ENCODE measurements at regions of chr12 and their contacts with region 1.

Region 1: GRCh38 chr12:47397664-47398281 is 308.1 kb downstream of the RPAP3 start:
- DNase-seq: peak in 2 of 4 experiments; percentile 32 to 57
- ATAC-seq: peak; percentile 95
- H3K4me3 ChIP-seq: no peak overlapping the region
- H3K27ac ChIP-seq: no peak overlapping the region
- H3K4me1 ChIP-seq: peaks cover 0 to 8% of the 10 kb centered on the region in 2 experiments; a peak in 1 of 5 replicates
- H3K27me3 ChIP-seq: no peaks in the 10 kb centered on the region
- CTCF ChIP-seq: peak; percentile 46 to 71 (median 56); a peak in 5 of 6 replicates
- EP300 ChIP-seq: no peak
- POLR2A ChIP-seq: no peak
- RAD21 ChIP-seq: peak; percentile 65 to 86

Region 2: DNA sequence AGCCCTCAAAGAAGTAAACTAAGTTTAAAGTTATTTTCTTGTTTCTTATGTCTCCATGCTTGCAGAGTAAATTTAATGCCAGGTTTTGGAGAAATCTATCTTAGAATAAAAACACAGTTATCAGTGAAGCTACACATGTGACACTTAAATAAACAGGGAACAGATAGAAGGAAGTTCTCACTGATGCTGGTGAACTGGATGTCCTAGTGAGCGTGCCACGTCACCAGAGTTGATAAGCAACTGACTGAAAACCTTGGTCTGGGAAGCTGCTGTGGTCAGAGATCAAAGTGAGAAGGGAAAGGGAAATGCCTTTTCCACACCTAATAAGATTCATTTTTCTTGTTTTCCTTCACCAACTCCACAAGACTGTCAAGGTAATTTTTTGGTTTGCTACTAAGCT is 393.1 kb before region 1 on chr12:
- CTCF ChIA-PET with region 1: no interaction called
- POLR2A ChIA-PET with region 1: no interaction called
- in situ Hi-C with region 1: no loop called
- intact Hi-C with region 1: no loop called
- DNase-seq: peak in 1 of 4 experiments; percentile 16
- ATAC-seq: no peak
- H3K4me3 ChIP-seq: no peak overlapping the region
- H3K27ac ChIP-seq: no peak overlapping the region
- H3K4me1 ChIP-seq: no peaks in the 10 kb centered on the region
- H3K27me3 ChIP-seq: no peaks in the 10 kb centered on the region
- CTCF ChIP-seq: no peak
- EP300 ChIP-seq: no peak
- POLR2A ChIP-seq: no peak
- RAD21 ChIP-seq: no peak

Region 3: DNA sequence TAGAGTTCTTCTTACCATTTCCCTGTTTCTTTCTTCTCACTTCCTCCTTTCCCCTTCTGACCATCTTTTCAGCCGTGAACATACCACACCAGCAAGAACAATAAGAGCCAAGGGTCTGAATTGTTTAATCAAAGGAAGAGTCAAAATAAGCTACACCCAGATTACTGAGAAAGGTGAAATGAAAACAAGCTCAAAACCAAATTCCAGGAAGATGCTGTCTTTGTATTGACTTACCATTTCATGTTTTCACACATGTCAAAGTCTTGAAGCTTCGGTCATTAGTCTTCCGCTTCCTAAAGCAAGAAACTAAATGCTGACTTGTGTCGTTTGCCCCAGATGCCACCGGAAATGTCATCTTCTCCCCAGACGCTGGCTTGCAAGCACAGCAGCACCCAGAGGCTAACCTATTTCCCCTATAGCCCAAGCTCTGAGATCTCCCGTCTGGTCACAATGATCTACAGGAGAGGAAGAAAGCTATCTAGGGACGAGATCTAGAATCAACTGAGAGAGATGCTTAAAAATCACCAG is 181.6 kb before region 1 on chr12:
- CTCF ChIA-PET with region 1: no interaction called
- POLR2A ChIA-PET with region 1: no interaction called
- in situ Hi-C with region 1: no loop called
- intact Hi-C with region 1: no loop called
- DNase-seq: peak in 1 of 4 experiments; percentile 53
- ATAC-seq: peak; percentile 25
- H3K4me3 ChIP-seq: no peak overlapping the region
- H3K27ac ChIP-seq: peak overlapping the region; percentile 81
- H3K4me1 ChIP-seq: peaks cover 3 to 20% of the 10 kb centered on the region in 2 experiments; a peak in 4 of 5 replicates
- H3K27me3 ChIP-seq: no peaks in the 10 kb centered on the region
- CTCF ChIP-seq: no peak
- EP300 ChIP-seq: no peak
- POLR2A ChIP-seq: no peak
- RAD21 ChIP-seq: no peak

Region 4: DNA sequence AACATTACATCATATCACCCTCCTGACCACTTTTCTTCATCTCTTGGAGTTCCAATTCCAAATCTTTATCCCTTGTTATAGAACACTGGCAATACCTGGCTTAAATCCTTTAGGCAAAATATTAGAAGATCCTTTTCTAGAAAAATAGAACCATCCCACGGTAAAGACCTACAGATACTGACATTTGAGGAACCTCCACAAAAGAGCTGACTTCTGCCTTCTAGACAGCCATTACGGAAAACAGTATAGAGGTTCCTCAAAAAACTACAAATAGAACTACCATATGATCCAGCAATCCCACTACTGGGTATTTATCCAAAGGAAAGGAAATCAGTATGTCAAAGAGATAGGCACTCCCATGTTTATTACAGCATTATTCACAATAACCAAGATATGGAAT is 76.3 kb before region 1 on chr12:
- CTCF ChIA-PET with region 1: no interaction called
- POLR2A ChIA-PET with region 1: no interaction called
- in situ Hi-C with region 1: no loop called
- intact Hi-C with region 1: no loop called
- DNase-seq: no peak
- ATAC-seq: no peak
- H3K4me3 ChIP-seq: no peak overlapping the region
- H3K27ac ChIP-seq: no peak overlapping the region
- H3K4me1 ChIP-seq: peaks cover 0 to 7% of the 10 kb centered on the region in 2 experiments; a peak in 1 of 5 replicates
- H3K27me3 ChIP-seq: no peaks in the 10 kb centered on the region
- CTCF ChIP-seq: no peak
- EP300 ChIP-seq: no peak
- POLR2A ChIP-seq: no peak
- RAD21 ChIP-seq: no peak

Region 5: DNA sequence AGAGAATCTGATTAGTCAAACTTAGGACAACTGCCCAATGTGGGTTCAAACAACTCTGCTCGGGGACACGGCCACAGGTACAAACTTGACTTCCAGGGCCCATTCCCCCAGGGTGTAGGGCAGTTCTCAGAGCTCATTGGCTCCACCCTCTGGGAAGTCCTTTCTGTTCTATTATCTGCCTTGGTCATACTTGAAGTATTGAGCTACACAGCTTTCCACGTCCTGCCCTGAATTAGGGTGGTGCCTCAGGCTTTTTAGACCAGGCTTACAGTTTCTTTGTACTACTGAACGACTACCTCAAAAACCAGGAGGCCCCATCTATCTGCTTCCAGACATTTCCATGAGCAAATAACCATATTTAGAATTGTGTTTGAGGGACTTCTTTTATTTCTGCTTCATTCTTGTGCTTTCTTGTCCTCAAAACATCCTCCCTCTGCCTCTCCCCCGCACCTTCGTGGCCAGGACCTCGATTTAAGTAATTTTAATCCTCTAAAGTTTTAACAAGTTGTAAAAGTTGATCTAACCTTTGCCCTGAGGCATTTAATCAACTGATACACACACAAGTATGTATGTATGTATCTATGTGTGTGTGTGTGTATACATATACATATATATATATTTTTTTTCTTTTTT is 36.3 kb before region 1 on chr12:
- CTCF ChIA-PET with region 1: no interaction called
- POLR2A ChIA-PET with region 1: no interaction called
- in situ Hi-C with region 1: no loop called
- intact Hi-C with region 1: loop called (anchors 2 kb)
- DNase-seq: peak; percentile 36 to 85 (median 54)
- ATAC-seq: peak; percentile 98
- H3K4me3 ChIP-seq: peak overlapping the region; percentile 31
- H3K27ac ChIP-seq: peak overlapping the region; percentile 67
- H3K4me1 ChIP-seq: peaks cover 0 to 36% of the 10 kb centered on the region in 2 experiments; a peak in 4 of 5 replicates
- H3K27me3 ChIP-seq: no peaks in the 10 kb centered on the region
- CTCF ChIP-seq: peak in 2 of 3 experiments; percentile 31 to 50; a peak in 3 of 6 replicates
- EP300 ChIP-seq: peak; percentile 34; the same call in 1 of the 2 replicates
- POLR2A ChIP-seq: peak; percentile 53
- RAD21 ChIP-seq: peak; percentile 47 to 64

Measured in K562 (cell line).